IMR-90 (cell line): ENCODE measurements at regions of chr5 and their contacts with region 1.

Region 1: GRCh38 chr5:106833517-106833916 is 837.2 kb downstream of the EFNA5 start:
- DNase-seq: no peak
- ATAC-seq: no peak
- H3K4me3 ChIP-seq: no peak overlapping the region
- H3K27ac ChIP-seq: no peak overlapping the region
- H3K4me1 ChIP-seq: no peaks in the 10 kb centered on the region
- H3K27me3 ChIP-seq: no peaks in the 10 kb centered on the region
- CTCF ChIP-seq: no peak
- POLR2A ChIP-seq: no peak
- RAD21 ChIP-seq: no peak

Region 2: DNA sequence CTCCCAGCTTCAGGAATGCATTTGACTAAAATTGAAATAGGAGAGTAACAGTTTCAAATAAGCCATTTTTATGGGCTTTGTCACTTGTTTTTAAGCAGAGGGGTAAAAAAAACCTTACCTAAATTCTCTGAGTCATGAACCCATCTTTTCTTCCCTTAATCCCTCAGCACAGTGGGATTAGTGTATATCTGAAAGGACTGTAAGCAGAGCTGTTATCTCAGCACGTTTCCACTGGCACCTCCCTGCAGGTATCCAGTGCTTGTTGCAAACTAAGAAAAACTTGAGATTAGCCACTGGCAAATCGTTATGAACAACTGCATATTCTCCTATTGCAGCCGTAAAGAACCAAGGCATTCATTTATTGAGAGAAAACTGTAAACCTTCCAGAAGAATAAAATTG is 35.5 kb before region 1 on chr5:
- CTCF ChIA-PET with region 1: no interaction called
- POLR2A ChIA-PET with region 1: no interaction called
- dilution Hi-C with region 1: no loop called
- in situ Hi-C with region 1: no loop called
- intact Hi-C with region 1: loop called (anchors 1 kb)
- DNase-seq: no peak
- ATAC-seq: no peak
- H3K4me3 ChIP-seq: no peak overlapping the region
- H3K27ac ChIP-seq: no peak overlapping the region
- H3K4me1 ChIP-seq: no peaks in the 10 kb centered on the region
- H3K27me3 ChIP-seq: no peaks in the 10 kb centered on the region
- CTCF ChIP-seq: no peak
- POLR2A ChIP-seq: no peak
- RAD21 ChIP-seq: no peak